ENCODE measurements at regions of chr15 and their contacts with region 1.

Region 1: DNA sequence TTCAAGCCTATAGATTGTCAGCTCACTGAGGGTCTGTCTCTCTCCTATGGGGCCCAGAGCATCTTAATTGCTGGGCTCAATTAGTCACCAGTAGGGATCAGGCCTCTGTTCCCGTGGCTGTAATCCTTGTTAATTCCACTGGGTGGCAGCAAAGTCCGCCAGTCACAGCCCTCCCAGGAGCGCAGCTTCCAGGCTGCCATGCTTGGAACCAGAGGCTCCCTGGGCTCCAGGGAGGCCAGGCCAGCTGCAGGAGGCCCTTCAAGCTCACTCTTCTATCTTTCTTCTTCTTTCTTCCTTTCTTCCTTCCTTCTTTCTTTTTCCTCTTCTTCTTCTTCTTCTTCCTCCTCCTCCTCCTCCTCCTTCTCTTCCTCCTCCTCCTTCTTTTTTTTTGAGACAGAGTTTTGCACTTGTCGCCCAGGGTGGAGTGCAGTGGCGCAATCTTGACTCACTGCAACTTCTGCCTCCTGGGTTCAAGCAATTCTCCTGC is 14.4 kb downstream of the RNU5B-1 start:
- DNase-seq: peak; percentile 83
- H3K4me3 Mint-ChIP-seq: no peak overlapping the region
- H3K27ac Mint-ChIP-seq: no peak overlapping the region
- H3K4me1 Mint-ChIP-seq: no peaks in the 10 kb centered on the region
- H3K27me3 Mint-ChIP-seq: peaks cover 11% of the 10 kb centered on the region
- CTCF ChIP-seq: peak; percentile 91

Region 2: DNA sequence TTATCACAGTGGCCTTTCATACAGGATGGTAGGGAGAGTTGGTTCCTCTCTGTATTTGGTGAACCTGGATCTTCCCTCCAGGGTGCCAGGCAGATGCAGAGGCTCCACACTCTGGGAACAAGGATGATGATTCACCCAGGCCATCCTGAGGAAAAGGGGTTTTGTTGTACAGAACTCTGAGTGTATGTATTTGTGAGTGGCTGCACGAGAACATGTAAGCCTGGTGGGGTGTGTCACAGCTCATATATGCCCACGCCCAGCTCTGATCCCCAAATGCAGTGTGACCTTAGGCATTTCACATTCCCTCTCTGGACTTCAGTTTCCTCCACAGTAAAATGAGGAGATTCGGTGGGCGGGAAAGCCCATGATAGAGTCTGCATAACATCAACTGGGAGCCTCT is 96.0 kb before region 1 on chr15:
- CTCF ChIA-PET with region 1: no interaction called
- POLR2A ChIA-PET with region 1: no interaction called
- intact Hi-C with region 1: no loop called
- DNase-seq: peak; percentile 4
- H3K4me3 Mint-ChIP-seq: no peak overlapping the region
- H3K27ac Mint-ChIP-seq: no peak overlapping the region
- H3K4me1 Mint-ChIP-seq: no peaks in the 10 kb centered on the region
- H3K27me3 Mint-ChIP-seq: no peaks in the 10 kb centered on the region
- CTCF ChIP-seq: no peak

Region 3: DNA sequence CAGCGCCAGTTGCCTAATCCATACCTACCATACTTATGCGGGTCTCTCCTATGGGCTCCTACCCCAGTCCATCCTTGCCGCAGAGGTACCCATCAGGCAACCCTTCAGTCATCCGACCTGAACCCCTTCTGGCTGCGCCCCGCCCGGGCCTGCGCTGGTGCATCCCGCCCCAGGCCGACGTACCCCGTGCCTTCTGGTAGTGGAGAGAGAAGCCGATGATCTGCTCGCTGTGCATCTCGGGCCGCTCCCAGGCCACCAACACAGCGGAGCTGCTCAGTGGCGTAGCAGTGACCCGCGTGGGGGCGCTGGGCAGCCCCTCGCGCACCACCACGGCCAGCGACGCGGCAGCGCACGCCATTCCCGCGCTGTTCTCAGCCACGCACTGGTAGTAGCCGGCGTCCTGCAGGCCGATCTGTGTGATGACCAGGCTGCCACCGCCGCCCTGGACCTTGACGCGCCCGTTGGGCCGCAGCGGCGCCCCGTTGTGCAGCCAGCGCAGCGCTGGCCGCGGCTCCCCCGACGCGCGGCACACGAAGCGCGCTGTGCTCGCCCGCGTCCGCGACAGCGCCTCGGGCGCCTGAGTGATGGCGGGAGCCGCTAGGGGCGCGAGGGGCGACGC is 76.8 kb after region 1 on chr15:
- CTCF ChIA-PET with region 1: interaction called, 25 read pairs
- POLR2A ChIA-PET with region 1: no interaction called
- intact Hi-C with region 1: loop called (anchors 1 kb)
- DNase-seq: no peak
- H3K4me3 Mint-ChIP-seq: no peak overlapping the region
- H3K27ac Mint-ChIP-seq: no peak overlapping the region
- H3K4me1 Mint-ChIP-seq: no peaks in the 10 kb centered on the region
- H3K27me3 Mint-ChIP-seq: peaks cover 52% of the 10 kb centered on the region
- CTCF ChIP-seq: no peak

Region 4: GRCh38 chr15:65723876-65724275 is 405.0 kb after region 1 on chr15:
- CTCF ChIA-PET with region 1: no interaction called
- POLR2A ChIA-PET with region 1: no interaction called
- intact Hi-C with region 1: no loop called
- DNase-seq: no peak
- H3K4me3 Mint-ChIP-seq: no peak overlapping the region
- H3K27ac Mint-ChIP-seq: no peak overlapping the region
- H3K4me1 Mint-ChIP-seq: no peaks in the 10 kb centered on the region
- H3K27me3 Mint-ChIP-seq: no peaks in the 10 kb centered on the region
- CTCF ChIP-seq: no peak